ENCODE measurements at regions of chrX and their contacts with region 1.

Region 1: DNA sequence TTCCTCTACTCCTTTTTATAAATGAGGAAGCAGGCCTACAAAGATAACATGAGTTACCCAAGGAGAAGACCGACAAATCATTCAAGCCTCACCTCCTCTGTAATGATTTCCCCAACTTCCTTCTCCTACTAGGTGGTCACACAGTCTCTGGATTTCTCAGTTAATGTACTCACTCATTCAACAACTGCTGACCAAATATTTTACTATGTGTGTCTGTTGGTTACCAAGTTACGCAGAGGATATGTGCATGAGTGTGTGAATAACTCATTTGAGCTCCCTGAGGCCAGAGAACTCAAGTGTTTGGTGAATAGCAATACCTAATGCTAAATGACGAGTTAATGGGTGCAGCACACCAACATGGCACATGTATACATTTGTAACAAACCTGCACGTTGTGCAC is 10.4 kb downstream of the CASK start:
- DNase-seq: no peak
- H3K4me3 ChIP-seq: no peak overlapping the region
- H3K27ac ChIP-seq: no peak overlapping the region
- H3K4me1 ChIP-seq: no peaks in the 10 kb centered on the region
- H3K27me3 ChIP-seq: no peaks in the 10 kb centered on the region
- CTCF ChIP-seq: no peak
- POLR2A ChIP-seq: no peak

Region 2: GRCh38 chrX:41796577-41796976 is 116.3 kb before region 1 on chrX:
- intact Hi-C with region 1: no loop called
- DNase-seq: no peak
- H3K4me3 ChIP-seq: no peak overlapping the region
- H3K27ac ChIP-seq: no peak overlapping the region
- H3K4me1 ChIP-seq: no peaks in the 10 kb centered on the region
- H3K27me3 ChIP-seq: no peaks in the 10 kb centered on the region
- CTCF ChIP-seq: no peak
- POLR2A ChIP-seq: no peak

Region 3: GRCh38 chrX:41824551-41824950 is 88.4 kb before region 1 on chrX:
- intact Hi-C with region 1: loop called (anchors 10 kb)
- DNase-seq: no peak
- H3K4me3 ChIP-seq: no peak overlapping the region
- H3K27ac ChIP-seq: no peak overlapping the region
- H3K4me1 ChIP-seq: no peaks in the 10 kb centered on the region
- H3K27me3 ChIP-seq: no peaks in the 10 kb centered on the region
- CTCF ChIP-seq: no peak
- POLR2A ChIP-seq: no peak